Sciatic nerve (tissue), 2 donors: ENCODE measurements at regions of chr2 and their contacts with region 1.

Region 1: GRCh38 chr2:114857196-114857595 is 414.8 kb downstream of the DPP10 start:
- DNase-seq: no peak
- ATAC-seq: no peak

Region 2: DNA sequence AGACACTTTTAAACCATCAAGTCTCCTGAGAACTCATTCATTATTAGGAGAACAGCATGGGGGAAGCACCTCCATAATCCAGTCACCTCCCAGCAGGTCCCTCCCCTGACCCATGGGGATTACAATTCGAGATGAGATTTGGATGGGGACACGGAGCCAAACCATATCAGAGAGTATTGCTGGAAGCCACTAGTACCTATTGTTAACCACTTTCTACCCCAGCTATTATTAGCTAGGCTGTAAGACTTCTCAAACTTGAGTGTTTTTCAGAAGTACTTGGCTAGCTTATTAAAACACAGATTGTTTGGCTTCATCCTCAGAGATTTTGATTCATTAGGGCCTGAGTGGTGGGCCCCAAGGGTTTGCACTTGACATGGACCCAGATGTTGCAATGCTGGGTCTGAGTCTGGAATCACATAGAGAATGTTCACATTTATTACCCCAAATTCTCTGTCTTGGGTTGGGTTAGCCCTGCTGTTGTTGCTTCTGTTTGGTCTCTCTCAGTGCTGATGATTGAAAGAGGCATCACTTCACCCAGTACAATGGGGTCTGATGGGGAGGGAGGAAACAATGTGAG is 92.1 kb after region 1 on chr2:
- intact Hi-C with region 1: loop called (anchors 2 kb)
- DNase-seq: no peak
- ATAC-seq: no peak